ENCODE measurements at regions of chr6 and their contacts with region 1.

Region 1: DNA sequence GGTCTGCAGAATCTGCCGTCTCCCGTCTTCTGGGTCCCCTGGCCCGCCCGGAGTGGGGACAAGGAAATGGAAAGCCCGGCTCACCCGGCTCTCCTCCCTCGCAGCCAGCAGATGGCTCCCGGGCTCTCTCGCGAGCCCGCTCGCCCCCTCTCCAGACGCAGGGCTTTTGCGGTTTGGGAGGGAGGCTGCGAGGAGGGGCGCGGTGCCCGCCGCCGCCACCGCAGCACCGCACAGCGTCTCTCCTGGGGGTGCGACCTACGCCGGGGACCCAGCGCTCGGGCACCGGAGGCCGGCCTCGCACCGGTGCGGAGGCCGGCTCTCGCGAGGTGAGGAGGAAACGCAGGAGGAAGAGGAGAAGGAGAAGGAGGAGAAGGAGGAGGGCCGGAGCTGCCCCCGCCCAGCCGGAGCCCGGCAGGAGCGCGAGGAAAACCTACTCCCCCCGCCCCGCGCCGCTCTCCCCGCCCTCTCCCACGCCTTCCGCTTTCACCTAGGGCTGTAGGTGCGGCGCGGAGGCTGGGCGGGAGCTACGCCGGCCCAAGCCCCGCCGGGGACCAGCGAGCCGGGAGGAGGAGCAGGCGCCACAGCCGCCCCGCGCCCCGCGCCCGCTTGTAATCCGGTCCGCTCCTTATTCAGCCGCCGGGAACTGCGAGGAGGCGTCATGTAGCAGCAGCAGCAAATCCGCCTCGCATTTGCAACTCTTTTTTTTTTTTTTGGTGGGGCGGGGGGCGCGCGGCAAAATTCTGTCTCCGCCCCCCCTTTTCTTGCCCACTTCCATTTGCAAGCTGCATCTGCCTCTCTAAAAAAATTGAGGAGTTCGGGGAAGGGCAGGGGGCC is at the start of gene CARMIL1:
- DNase-seq: peak; percentile 72 to 82
- ATAC-seq: peak; percentile 69 to 91 (median 86)
- H3K4me3 ChIP-seq: peak within 1 kb of the TSS; percentile 73
- H3K27ac ChIP-seq: no peak within 1 kb of the TSS
- H3K4me1 ChIP-seq: peaks cover 8% of the 10 kb centered on the region
- H3K27me3 ChIP-seq: peaks cover 0 to 58% (median 0%) of the 10 kb centered on the region in 3 donors
- CTCF ChIP-seq: peak; percentile 48
- total RNA-seq, gene CARMIL1: 0.34 to 1.0 (median 0.81) TPM

Region 2: DNA sequence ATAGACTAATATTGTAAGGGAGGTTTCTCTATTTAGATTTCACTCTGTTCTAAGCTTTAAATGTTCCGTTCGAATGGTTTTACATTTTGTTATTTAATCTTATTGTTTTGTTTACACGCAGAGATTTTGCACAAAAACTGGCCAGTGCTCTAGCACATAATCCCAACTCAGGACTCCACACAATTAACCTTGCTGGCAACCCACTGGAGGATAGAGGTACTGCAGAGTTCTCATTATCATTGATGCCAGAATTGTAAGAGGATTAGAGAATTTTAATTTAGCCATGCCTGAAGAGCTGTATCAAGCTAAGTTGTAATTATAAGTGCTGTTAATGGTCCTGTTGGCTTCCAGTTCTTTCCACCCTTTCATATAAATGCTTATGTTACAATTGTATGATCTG is 193.2 kb after region 1 on chr6:
- intact Hi-C with region 1: loop called in 1 of 2 experiments (anchors 10 kb)
- DNase-seq: no peak
- ATAC-seq: no peak
- H3K4me3 ChIP-seq: no peak overlapping the region
- H3K27ac ChIP-seq: no peak overlapping the region
- H3K4me1 ChIP-seq: no peaks in the 10 kb centered on the region
- H3K27me3 ChIP-seq: no peaks in the 10 kb centered on the region
- CTCF ChIP-seq: no peak

Region 3: GRCh38 chr6:25490018-25490801 is 211.1 kb after region 1 on chr6:
- intact Hi-C with region 1: loop called (anchors 5 to 10 kb)
- DNase-seq: peak; percentile 51 to 66
- ATAC-seq: peak in 3 of 4 donors; percentile 53 to 67 (median 56)
- H3K4me3 ChIP-seq: no peak overlapping the region
- H3K27ac ChIP-seq: no peak overlapping the region
- H3K4me1 ChIP-seq: no peaks in the 10 kb centered on the region
- H3K27me3 ChIP-seq: no peaks in the 10 kb centered on the region
- CTCF ChIP-seq: peak; percentile 43

Region 4: DNA sequence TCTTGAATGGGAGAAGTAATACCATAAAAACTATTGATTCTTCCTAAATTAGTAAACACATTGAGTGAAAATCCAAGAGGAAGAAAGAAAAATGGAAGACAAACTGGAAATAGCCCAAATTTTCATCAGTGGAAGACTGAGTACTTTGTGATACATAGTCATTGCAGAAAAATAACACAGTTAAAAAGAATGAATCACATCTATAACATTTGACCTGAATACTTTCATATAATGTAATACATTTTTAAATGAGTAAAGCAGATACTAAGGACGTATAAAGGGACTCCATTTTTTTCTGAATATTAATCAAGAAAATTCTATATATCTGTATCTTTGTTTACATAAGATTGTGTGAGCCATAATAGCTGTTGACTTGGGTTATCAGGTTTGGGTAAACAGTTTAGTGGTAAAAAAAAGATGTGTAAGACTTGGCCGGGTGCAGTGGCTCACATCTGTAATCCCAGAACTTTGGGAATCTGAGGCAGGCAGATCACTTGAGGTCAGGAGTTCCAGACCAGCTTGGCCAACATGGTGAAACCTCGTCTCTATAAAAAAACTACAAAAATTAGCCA is 655.7 kb after region 1 on chr6:
- intact Hi-C with region 1: loop called in 1 of 2 experiments (anchors 10 kb)
- DNase-seq: no peak
- ATAC-seq: no peak
- H3K4me3 ChIP-seq: no peak overlapping the region
- H3K27ac ChIP-seq: no peak overlapping the region
- H3K4me1 ChIP-seq: no peaks in the 10 kb centered on the region
- H3K27me3 ChIP-seq: peaks cover 0 to 3% (median 0%) of the 10 kb centered on the region in 3 donors
- CTCF ChIP-seq: no peak

Measured in psoas muscle (tissue), 8 donors.